Activated naive CD8-positive, alpha-beta T cell treated with anti-CD3 and anti-CD28 coated beads, Interleukin-2, amount 10 ng/mL, durations not matched to agents 7 days and 5 days (primary cell): ENCODE measurements at regions of chr16 and their contacts with region 1.

Region 1: GRCh38 chr16:30761928-30762810 is at the starts of genes CFAP119 and RNF40:
- DNase-seq: peak; percentile 91
- ATAC-seq: peak; percentile 96
- H3K4me3 Mint-ChIP-seq: peak within 1 kb of the TSS; percentile 95
- H3K27ac Mint-ChIP-seq: peak within 1 kb of the TSS; percentile 88
- H3K4me1 Mint-ChIP-seq: peaks cover 17% of the 10 kb centered on the region
- H3K27me3 Mint-ChIP-seq: no peaks in the 10 kb centered on the region
- total RNA-seq, gene CFAP119: 4.4 TPM
- total RNA-seq, gene RNF40: 94.7 to 105 TPM

Region 2: DNA sequence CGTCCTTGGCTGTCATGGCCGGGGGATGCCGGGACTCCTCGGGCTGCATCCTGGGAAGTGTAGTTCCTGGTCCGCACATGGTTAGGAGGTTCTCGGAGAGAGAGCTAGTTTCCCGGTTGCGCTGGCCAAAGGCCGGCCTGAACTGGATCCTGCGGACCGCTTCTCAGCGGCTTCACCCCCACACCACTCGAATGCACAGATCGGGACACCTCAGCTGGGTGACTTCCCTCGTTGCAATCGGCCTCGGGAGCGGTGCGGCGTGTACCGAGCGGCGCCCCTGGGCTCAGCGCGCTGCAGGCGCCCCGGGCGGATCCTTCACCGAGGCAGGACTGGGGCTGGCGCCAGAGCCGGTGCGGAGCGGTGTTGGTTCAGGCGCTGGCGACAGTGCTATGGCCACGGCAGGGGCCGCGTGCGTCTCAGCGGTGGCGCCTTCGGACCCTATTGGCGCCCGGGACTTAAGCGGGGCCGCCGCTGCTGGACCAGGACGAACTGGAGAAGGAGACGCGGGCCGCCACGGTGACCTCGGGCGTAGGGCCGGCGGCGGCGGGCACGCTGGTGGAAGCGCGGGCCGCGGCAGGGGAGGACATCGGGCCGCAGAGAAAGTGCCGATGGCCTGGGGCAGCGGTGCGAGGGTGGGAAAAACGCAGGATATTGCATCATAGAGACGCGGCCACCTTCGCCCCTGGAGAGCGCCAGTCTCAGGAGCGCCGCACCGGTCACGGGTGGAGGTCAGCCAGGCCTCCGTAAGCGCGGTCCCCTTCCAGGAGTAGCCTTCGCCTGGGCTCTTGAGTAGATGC is 13.4 kb after region 1 on chr16:
- POLR2A ChIA-PET with region 1: interaction called, 10 read pairs
- DNase-seq: peak; percentile 75
- ATAC-seq: peak; percentile 81
- H3K4me3 Mint-ChIP-seq: peak overlapping the region; percentile 94
- H3K27ac Mint-ChIP-seq: peak overlapping the region; percentile 90
- H3K4me1 Mint-ChIP-seq: peaks cover 22% of the 10 kb centered on the region
- H3K27me3 Mint-ChIP-seq: no peaks in the 10 kb centered on the region